Activated CD4-positive, alpha-beta T cell treated with anti-CD3 and anti-CD28 coated beads for 36 hours (primary cell): ENCODE measurements at regions of chr3 and their contacts with region 1.

Region 1: GRCh38 chr3:124995460-124995994 is 60.3 kb downstream of the HEG1 start:
- DNase-seq: peak; percentile 63
- ATAC-seq: peak; percentile 92
- H3K4me3 Mint-ChIP-seq: no peak overlapping the region
- H3K27ac Mint-ChIP-seq: no peak overlapping the region
- H3K4me1 Mint-ChIP-seq: no peaks in the 10 kb centered on the region
- H3K27me3 Mint-ChIP-seq: no peaks in the 10 kb centered on the region

Region 2: GRCh38 chr3:124786441-124787241 is 208.9 kb before region 1 on chr3:
- CTCF ChIA-PET with region 1: no interaction called
- POLR2A ChIA-PET with region 1: no interaction called
- intact Hi-C with region 1: no loop called
- DNase-seq: no peak
- ATAC-seq: no peak
- H3K4me3 Mint-ChIP-seq: no peak overlapping the region
- H3K27ac Mint-ChIP-seq: no peak overlapping the region
- H3K4me1 Mint-ChIP-seq: peaks cover 4% of the 10 kb centered on the region
- H3K27me3 Mint-ChIP-seq: no peaks in the 10 kb centered on the region

Region 3: GRCh38 chr3:125202197-125202596 is 206.7 kb after region 1 on chr3:
- CTCF ChIA-PET with region 1: interaction called, 4 read pairs
- POLR2A ChIA-PET with region 1: no interaction called
- intact Hi-C with region 1: loop called (anchors 1 to 5 kb)
- DNase-seq: peak; percentile 35
- ATAC-seq: peak; percentile 74
- H3K4me3 Mint-ChIP-seq: no peak overlapping the region
- H3K27ac Mint-ChIP-seq: no peak overlapping the region
- H3K4me1 Mint-ChIP-seq: no peaks in the 10 kb centered on the region
- H3K27me3 Mint-ChIP-seq: peaks cover 9% of the 10 kb centered on the region